PC-9 (cell line): ENCODE measurements at regions of chr12 and their contacts with region 1.

Region 1: DNA sequence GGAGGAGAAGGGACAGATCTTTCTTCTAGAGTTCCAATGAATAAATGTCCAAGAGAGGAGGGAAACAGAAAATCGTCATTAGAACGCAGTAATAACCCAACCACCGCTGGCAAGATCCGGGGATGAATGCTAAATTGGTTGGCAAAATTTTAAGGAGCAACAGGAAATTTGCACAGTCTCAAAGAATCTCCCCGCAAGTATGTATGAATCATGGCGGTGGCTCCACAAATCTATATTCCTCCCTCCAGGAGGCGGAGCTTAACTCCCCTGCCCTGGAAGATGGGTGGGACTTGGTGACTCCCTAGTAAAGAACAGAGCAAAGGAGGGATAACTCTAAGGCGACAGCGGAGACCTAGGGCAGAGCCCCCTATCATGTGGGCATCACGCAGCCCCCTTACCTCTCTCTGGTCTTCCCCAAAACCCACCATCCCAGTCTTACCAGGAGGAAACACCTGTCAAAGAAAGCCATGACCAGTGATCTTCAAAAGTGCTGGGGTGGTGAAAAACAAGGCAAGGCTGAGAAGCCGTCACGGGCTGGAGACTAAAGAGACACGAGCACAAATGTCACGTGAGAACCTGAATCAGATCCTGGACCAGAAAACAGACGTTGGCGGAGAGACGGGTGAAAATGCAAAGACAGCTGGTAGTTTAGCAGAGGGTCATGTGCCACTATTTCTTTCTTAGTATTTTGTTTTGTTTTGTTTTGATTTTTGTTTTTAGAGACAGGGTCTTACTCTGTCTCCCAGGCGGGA is 125.8 kb downstream of the NCOR2 start:
- DNase-seq: peak; percentile 82 to 89
- H3K4me3 ChIP-seq: peak overlapping the region; percentile 52
- H3K27ac ChIP-seq: peak overlapping the region; percentile 97
- H3K4me1 ChIP-seq: peaks cover 33% of the 10 kb centered on the region
- H3K27me3 ChIP-seq: no peaks in the 10 kb centered on the region
- CTCF ChIP-seq: no peak

Region 2: GRCh38 chr12:124381454-124382207 is 60.0 kb before region 1 on chr12:
- CTCF ChIA-PET with region 1: no interaction called
- POLR2A ChIA-PET with region 1: no interaction called
- intact Hi-C with region 1: loop called (anchors 1 kb)
- DNase-seq: peak; percentile 95 to 99
- H3K4me3 ChIP-seq: no peak overlapping the region
- H3K27ac ChIP-seq: peak overlapping the region; percentile 53
- H3K4me1 ChIP-seq: peaks cover 52% of the 10 kb centered on the region
- H3K27me3 ChIP-seq: no peaks in the 10 kb centered on the region
- CTCF ChIP-seq: no peak

Region 3: GRCh38 chr12:124422570-124423523 is 18.8 kb before region 1 on chr12:
- CTCF ChIA-PET with region 1: no interaction called
- POLR2A ChIA-PET with region 1: interaction called, 6 read pairs
- intact Hi-C with region 1: loop called (anchors 1 kb)
- DNase-seq: peak; percentile 84 to 96
- H3K4me3 ChIP-seq: peak overlapping the region; percentile 49; the same call in 1 of the 2 replicates
- H3K27ac ChIP-seq: peak overlapping the region; percentile 91
- H3K4me1 ChIP-seq: peaks cover 32% of the 10 kb centered on the region
- H3K27me3 ChIP-seq: no peaks in the 10 kb centered on the region
- CTCF ChIP-seq: no peak

Region 4: DNA sequence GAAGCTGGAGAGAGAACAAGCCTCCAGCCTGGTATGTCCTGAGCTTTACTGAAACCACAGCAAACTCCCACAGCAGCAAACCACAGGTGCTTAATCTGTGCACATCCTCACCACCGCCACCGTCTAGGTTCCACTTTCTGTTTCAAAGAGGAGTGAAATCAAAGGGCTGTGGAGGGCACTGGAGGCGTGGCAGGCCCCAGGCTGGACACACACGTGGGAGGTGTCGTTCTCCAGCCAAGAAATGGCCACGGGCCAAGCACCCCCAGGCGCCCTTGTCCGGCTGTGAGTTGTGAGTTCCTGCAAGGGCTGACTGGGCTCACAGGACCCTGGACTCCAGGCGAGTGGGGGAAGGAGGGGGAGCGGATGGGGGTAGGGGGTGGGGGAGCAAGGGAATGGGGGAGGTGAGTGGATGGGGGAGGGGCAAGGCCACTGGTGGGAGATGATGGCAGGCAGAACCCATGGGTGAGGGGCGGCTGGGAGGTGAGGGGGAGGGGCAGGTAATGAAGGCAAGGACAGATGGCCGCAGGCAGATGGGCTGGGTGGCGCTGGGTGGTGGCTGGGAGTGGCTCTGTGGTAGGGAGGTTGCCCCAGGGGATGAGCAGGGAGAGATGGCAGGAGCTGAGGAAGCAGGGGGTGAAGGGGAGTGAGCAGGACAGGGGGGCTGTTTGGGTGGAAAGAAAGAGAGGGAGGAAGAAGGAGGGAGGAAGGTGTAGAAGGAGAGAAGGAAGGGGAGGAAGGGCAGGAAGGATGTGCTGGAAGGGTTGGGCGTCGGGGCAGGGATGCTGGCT is 39.0 kb after region 1 on chr12:
- CTCF ChIA-PET with region 1: no interaction called
- POLR2A ChIA-PET with region 1: no interaction called
- intact Hi-C with region 1: loop called (anchors 1 kb)
- DNase-seq: peak; percentile 91 to 98
- H3K4me3 ChIP-seq: no peak overlapping the region; the same call in 1 of the 2 replicates
- H3K27ac ChIP-seq: peak overlapping the region; percentile 59
- H3K4me1 ChIP-seq: peaks cover 28% of the 10 kb centered on the region
- H3K27me3 ChIP-seq: no peaks in the 10 kb centered on the region
- CTCF ChIP-seq: no peak

Region 5: GRCh38 chr12:124727264-124727721 is 285.7 kb after region 1 on chr12:
- CTCF ChIA-PET with region 1: no interaction called
- POLR2A ChIA-PET with region 1: no interaction called
- intact Hi-C with region 1: loop called (anchors 1 kb)
- DNase-seq: peak; percentile 86 to 97
- H3K4me3 ChIP-seq: no peak overlapping the region
- H3K27ac ChIP-seq: peak overlapping the region; percentile 91
- H3K4me1 ChIP-seq: peaks cover 45% of the 10 kb centered on the region
- H3K27me3 ChIP-seq: no peaks in the 10 kb centered on the region
- CTCF ChIP-seq: no peak